ENCODE measurements at regions of chr11 and their contacts with region 1.

Region 1: GRCh38 chr11:120013325-120014270 is 124.3 kb downstream of the TRIM29 start:
- DNase-seq: peak; percentile 43
- ATAC-seq: no peak
- H3K4me3 Mint-ChIP-seq: no peak overlapping the region
- H3K27ac Mint-ChIP-seq: no peak overlapping the region
- H3K4me1 Mint-ChIP-seq: no peaks in the 10 kb centered on the region
- H3K27me3 Mint-ChIP-seq: peaks cover 46% of the 10 kb centered on the region

Region 2: DNA sequence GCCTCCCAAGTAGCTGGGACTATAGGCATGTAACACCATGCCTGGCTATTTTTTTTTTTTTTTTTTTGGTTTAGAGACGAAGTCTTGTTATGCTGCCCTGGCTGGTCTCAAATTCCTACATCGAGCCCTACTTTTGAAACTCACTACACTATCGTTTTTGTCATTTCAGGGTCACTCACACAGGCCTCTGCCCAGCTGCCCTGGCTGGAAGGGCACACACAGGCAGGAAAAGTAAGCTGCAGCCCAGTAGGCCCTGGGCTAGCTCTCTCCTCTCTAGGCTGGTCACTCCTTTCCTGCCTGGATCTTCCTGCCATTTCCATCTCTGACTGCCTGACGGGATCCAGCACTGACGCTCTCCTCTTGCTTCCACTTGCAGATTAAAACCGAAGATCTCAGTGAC is 284.3 kb after region 1 on chr11:
- CTCF ChIA-PET with region 1: no interaction called
- POLR2A ChIA-PET with region 1: interaction called, 10 read pairs
- intact Hi-C with region 1: no loop called
- DNase-seq: no peak
- ATAC-seq: no peak
- H3K4me3 Mint-ChIP-seq: no peak overlapping the region
- H3K27ac Mint-ChIP-seq: no peak overlapping the region
- H3K4me1 Mint-ChIP-seq: no peaks in the 10 kb centered on the region
- H3K27me3 Mint-ChIP-seq: peaks cover 41% of the 10 kb centered on the region